CD4-positive, alpha-beta memory T cell (primary cell): ENCODE measurements at regions of chr2 and their contacts with region 1.

Region 1: DNA sequence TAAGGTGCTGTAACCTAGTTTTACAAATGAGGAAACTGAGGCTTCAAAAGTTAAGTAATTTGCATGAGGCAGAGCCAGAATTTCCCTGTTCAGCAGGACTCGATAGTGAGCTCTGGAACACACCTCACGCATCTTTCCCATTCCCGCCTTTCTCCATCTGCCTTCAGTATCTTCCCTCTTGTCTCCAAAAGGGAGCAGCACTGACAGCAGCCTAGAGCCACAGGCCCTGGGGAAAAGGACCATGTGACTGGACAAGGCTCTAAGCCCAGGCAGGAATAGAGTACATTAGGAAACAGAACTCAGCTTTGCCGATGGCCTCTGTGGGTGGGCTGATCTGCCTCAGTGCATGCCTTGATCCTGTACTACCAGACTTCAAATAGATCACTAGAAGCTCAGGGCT is 21.5 kb downstream of the GPR155 start:
- DNase-seq: no peak
- H3K4me3 ChIP-seq: no peak overlapping the region
- H3K4me3 Mint-ChIP-seq: no peak overlapping the region
- H3K27ac ChIP-seq: no peak overlapping the region
- H3K27ac Mint-ChIP-seq: peak overlapping the region in 1 of 7 donors; percentile 60
- H3K4me1 ChIP-seq: no peaks in the 10 kb centered on the region
- H3K4me1 Mint-ChIP-seq: no peaks in the 10 kb centered on the region
- H3K27me3 ChIP-seq: no peaks in the 10 kb centered on the region
- H3K27me3 Mint-ChIP-seq: no peaks in the 10 kb centered on the region

Region 2: GRCh38 chr2:173545364-173545763 is 920.0 kb before region 1 on chr2:
- CTCF ChIA-PET with region 1: no interaction called
- POLR2A ChIA-PET with region 1: no interaction called
- intact Hi-C with region 1: no loop called
- DNase-seq: no peak
- H3K4me3 ChIP-seq: no peak overlapping the region
- H3K4me3 Mint-ChIP-seq: no peak overlapping the region
- H3K27ac ChIP-seq: no peak overlapping the region
- H3K27ac Mint-ChIP-seq: no peak overlapping the region
- H3K4me1 ChIP-seq: no peaks in the 10 kb centered on the region
- H3K4me1 Mint-ChIP-seq: peaks cover 0 to 2% (median 0%) of the 10 kb centered on the region in 4 donors
- H3K27me3 ChIP-seq: peaks cover 5% of the 10 kb centered on the region
- H3K27me3 Mint-ChIP-seq: peaks cover 14% of the 10 kb centered on the region in 2 donors

Region 3: DNA sequence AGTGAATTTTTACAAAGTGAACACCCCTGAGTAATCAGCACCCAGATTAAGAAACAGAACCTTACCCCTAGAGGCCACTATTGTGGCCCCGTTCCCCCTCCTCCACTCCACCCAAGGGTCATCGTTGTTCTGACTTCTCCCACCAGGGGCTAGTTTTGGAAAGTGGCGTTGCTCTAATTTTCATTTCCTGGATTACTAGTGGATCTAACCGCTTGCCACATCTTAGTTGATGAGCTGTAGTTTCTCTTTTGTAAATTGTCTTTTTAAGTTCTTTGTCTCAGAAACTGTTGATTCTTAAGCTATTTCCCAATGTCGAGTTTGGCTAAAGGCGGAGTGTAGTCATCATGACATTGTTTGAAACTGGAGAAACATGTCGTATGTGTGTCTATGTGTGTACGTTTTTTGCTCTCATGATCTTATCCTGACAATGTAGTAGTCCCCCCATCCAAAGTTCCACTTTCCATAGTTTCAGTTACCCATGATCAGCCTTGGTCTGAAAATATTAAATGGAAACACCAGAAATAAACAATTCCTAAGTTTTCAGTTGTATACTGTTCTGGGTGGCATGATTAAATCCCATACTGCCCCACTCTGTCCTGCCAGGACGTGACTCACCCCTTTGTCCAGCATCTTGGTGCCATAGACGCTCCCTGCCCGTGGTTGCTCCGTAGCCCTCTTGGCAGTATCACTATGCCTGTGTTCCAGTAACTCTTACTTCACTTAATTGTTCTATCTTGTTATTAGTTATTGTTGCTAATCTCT is 429.2 kb before region 1 on chr2:
- CTCF ChIA-PET with region 1: no interaction called
- POLR2A ChIA-PET with region 1: no interaction called
- intact Hi-C with region 1: no loop called
- DNase-seq: no peak
- H3K4me3 ChIP-seq: no peak overlapping the region
- H3K4me3 Mint-ChIP-seq: no peak overlapping the region
- H3K27ac ChIP-seq: no peak overlapping the region
- H3K27ac Mint-ChIP-seq: no peak overlapping the region
- H3K4me1 ChIP-seq: peaks cover 10% of the 10 kb centered on the region
- H3K4me1 Mint-ChIP-seq: peaks cover 8 to 10% (median 8%) of the 10 kb centered on the region in 4 donors
- H3K27me3 ChIP-seq: no peaks in the 10 kb centered on the region
- H3K27me3 Mint-ChIP-seq: peaks cover 1 to 3% of the 10 kb centered on the region in 2 donors

Region 4: DNA sequence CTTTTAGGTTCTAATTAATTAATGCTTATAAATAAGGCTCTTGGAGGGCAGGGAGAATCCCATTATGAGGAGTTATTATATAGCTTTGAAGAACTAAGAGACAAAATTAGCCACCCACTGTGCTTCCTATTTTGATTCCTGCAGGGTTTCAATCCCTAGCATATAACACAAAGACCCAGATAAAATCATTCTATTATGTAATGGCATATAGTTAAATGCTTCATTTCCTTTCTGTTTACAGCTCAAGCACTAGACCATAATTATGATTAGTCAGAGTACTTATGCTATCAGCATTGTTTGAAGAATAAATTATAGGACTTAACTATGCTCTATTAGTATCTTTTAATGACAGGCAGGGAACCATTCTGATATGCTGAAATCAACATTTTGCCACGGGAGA is 12.4 kb after region 1 on chr2:
- CTCF ChIA-PET with region 1: interaction called, 64 read pairs
- POLR2A ChIA-PET with region 1: interaction called, 4 read pairs
- intact Hi-C with region 1: no loop called
- DNase-seq: no peak
- H3K4me3 ChIP-seq: no peak overlapping the region
- H3K4me3 Mint-ChIP-seq: peak overlapping the region in 1 of 8 donors; percentile 58
- H3K27ac ChIP-seq: no peak overlapping the region
- H3K27ac Mint-ChIP-seq: peak overlapping the region in 1 of 7 donors; percentile 55
- H3K4me1 ChIP-seq: no peaks in the 10 kb centered on the region
- H3K4me1 Mint-ChIP-seq: peaks cover 12 to 23% (median 15%) of the 10 kb centered on the region in 4 donors
- H3K27me3 ChIP-seq: no peaks in the 10 kb centered on the region
- H3K27me3 Mint-ChIP-seq: no peaks in the 10 kb centered on the region

Region 5: GRCh38 chr2:174492963-174493431 is 27.7 kb after region 1 on chr2:
- CTCF ChIA-PET with region 1: interaction called, 27 read pairs
- POLR2A ChIA-PET with region 1: interaction called, 20 read pairs
- intact Hi-C with region 1: loop called (anchors 2 kb)
- DNase-seq: peak; percentile 76 to 86 (median 83)
- H3K4me3 ChIP-seq: peak overlapping the region; percentile 33 to 35
- H3K4me3 Mint-ChIP-seq: peak overlapping the region; percentile 84 to 95 (median 90)
- H3K27ac ChIP-seq: peak overlapping the region; percentile 78
- H3K27ac Mint-ChIP-seq: peak overlapping the region; percentile 91 to 98 (median 96)
- H3K4me1 ChIP-seq: peaks cover 80% of the 10 kb centered on the region
- H3K4me1 Mint-ChIP-seq: peaks cover 49 to 87% (median 66%) of the 10 kb centered on the region in 4 donors
- H3K27me3 ChIP-seq: no peaks in the 10 kb centered on the region
- H3K27me3 Mint-ChIP-seq: no peaks in the 10 kb centered on the region

Region 6: DNA sequence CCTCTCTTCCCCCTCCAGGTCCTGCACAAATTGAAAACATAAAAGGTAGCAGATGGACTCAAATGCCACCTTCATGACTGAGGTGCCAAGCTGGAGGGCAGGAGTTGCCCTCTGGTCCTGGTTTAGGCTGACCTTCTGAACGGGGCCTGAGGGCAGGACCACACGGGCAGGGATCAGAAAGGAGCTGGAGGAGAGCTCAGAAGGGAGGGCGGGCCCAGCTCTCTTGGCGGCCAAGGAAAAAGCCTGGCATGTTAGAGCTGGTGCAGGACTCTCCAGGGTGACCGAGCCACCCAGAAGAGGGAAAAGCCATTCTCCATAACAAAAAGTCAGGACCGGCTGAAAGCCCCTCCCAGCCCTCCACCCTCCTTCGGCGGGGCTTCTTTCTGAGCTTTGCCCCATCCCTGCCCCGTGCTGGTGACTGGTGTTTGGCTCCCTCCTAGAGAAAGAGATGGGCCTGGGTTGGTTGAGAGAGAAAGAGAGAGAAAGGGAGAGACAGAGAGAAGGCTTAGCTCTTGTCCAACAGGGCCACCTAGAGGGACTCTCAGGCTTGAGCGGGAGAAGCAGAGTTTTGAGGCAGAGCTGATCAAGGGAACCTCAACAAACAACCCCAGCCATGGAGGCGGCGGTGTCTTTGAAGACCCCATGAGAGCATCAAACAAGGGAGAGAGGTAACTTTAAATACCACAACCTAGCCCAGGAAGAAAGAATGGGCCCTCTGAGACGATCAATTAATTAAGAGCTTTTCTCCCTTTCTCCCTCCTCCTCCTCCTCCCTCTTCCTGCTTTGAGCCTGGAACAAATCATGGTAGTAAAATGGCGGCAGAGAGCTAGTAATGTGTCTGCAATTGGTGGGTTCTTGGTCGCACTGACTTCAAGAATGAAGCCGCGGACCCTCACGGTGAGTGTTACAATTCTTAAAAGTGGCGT is 81.5 kb after region 1 on chr2:
- CTCF ChIA-PET with region 1: interaction called, 58 read pairs
- POLR2A ChIA-PET with region 1: interaction called, 6 read pairs
- intact Hi-C with region 1: loop called (anchors 1 kb)
- DNase-seq: peak in 3 of 5 donors; percentile 15 to 34 (median 28)
- H3K4me3 ChIP-seq: no peak overlapping the region
- H3K4me3 Mint-ChIP-seq: peak overlapping the region in 1 of 8 donors; percentile 63
- H3K27ac ChIP-seq: no peak overlapping the region
- H3K27ac Mint-ChIP-seq: peak overlapping the region; percentile 0 to 84 (median 42)
- H3K4me1 ChIP-seq: no peaks in the 10 kb centered on the region
- H3K4me1 Mint-ChIP-seq: peaks cover 5 to 10% (median 9%) of the 10 kb centered on the region in 4 donors
- H3K27me3 ChIP-seq: no peaks in the 10 kb centered on the region
- H3K27me3 Mint-ChIP-seq: no peaks in the 10 kb centered on the region

Region 7: DNA sequence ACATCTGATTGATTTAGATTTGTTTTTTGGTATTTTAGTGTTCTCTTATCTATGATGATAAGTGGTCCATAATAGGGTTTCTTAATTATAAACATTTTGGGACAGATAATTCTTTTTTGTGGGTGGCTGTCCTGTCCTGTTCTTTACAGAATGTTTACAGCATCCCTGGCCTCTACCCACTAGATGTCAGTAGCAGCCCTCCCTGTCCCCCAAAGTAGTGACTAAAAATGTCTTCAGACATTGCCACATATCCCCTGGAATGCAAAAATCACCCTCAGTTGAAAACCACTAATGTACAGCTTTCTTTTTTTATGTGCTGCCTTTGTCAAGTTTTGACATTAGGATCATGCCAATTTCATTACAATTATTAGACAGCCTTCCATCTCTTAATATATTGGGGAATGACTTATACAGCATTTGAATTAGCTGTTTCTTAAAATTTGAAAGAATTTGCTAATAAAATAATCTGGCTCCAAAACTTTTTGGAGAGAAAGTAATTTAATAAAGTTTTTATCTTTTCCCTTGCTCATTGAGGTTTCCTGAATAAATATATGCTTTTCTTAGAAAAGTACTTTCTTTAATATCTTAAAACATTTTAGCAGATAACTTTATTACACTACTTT is 112.8 kb after region 1 on chr2:
- CTCF ChIA-PET with region 1: interaction called, 19 read pairs
- POLR2A ChIA-PET with region 1: interaction called, 3 read pairs
- intact Hi-C with region 1: no loop called
- DNase-seq: peak; percentile 63 to 77 (median 67)
- H3K4me3 ChIP-seq: no peak overlapping the region
- H3K4me3 Mint-ChIP-seq: peak overlapping the region in 1 of 8 donors; percentile 3
- H3K27ac ChIP-seq: no peak overlapping the region
- H3K27ac Mint-ChIP-seq: peak overlapping the region; percentile 66 to 88 (median 80)
- H3K4me1 ChIP-seq: peaks cover 93% of the 10 kb centered on the region
- H3K4me1 Mint-ChIP-seq: peaks cover 49 to 93% (median 68%) of the 10 kb centered on the region in 4 donors
- H3K27me3 ChIP-seq: no peaks in the 10 kb centered on the region
- H3K27me3 Mint-ChIP-seq: no peaks in the 10 kb centered on the region

Region 8: DNA sequence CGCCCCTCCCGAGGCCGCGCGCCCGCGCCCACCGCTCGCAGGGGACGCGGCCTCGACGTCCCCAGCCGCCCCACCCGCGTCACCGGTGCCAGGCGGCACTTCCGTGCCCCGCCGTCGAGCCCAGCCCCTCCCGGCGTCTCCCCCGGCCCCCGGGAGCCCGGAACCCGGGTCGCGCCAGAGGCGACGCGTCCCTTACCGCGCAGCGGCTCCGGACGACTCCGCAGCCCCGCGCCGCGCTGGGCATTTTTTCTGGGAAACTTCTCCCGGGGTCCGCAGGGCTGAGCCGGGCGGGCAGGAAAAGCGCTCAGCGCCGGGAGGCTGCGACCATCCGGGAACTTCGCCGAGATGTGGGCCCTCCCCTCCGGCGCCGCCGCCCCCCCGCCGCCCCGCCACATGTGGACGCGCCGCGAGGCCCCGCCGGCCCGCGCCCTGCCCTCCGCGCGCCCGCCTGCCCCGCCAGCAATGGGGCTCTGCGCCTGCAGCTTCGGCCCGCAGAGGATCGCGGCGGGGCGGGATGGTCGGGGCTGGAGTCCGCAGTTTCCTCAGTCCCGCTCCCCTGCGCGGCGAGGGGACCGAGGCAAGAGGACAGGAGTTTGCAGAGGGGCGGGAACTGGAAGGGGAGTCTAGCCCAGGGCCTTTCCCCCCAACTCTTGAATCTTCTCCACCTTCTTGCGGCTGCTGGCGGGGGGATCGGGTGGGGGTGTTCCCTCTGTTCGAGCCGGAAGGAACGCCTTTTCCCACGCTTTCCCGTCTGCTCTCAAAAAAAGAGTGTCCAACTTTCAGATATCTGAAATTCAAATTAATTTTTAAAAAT is 217.5 kb after region 1 on chr2:
- CTCF ChIA-PET with region 1: interaction called, 138 read pairs
- POLR2A ChIA-PET with region 1: interaction called, 4 read pairs
- intact Hi-C with region 1: no loop called
- DNase-seq: peak; percentile 66 to 79 (median 73)
- H3K4me3 ChIP-seq: peak overlapping the region; percentile 49 to 69
- H3K4me3 Mint-ChIP-seq: peak overlapping the region; percentile 89 to 97 (median 93)
- H3K27ac ChIP-seq: peak overlapping the region; percentile 84
- H3K27ac Mint-ChIP-seq: peak overlapping the region; percentile 86 to 96 (median 94)
- H3K4me1 ChIP-seq: peaks cover 48% of the 10 kb centered on the region
- H3K4me1 Mint-ChIP-seq: peaks cover 36 to 60% (median 48%) of the 10 kb centered on the region in 4 donors
- H3K27me3 ChIP-seq: no peaks in the 10 kb centered on the region
- H3K27me3 Mint-ChIP-seq: no peaks in the 10 kb centered on the region